Heart left ventricle (tissue), 16 donors: ENCODE measurements at regions of chr18 and their contacts with region 1.

Region 1: GRCh38 chr18:50287441-50288347 is at the start of gene CXXC1:
- DNase-seq: peak; percentile 97 to 99 (median 98)
- ATAC-seq: peak; percentile 95 to 97 (median 96)
- H3K4me3 ChIP-seq: peak within 1 kb of the TSS; percentile 55 to 90 (median 77)
- H3K27ac ChIP-seq: peak within 1 kb of the TSS; percentile 45 to 94 (median 86)
- H3K4me1 ChIP-seq: peaks cover 0 to 20% (median 0%) of the 10 kb centered on the region in 12 donors
- H3K27me3 ChIP-seq: no peaks in the 10 kb centered on the region
- CTCF ChIP-seq: peak; percentile 36 to 63 (median 48)
- POLR2A ChIP-seq: peak in 1 of 2 donors; percentile 44
- total RNA-seq, gene CXXC1: 18.3 to 36.7 (median 33.2) TPM

Region 2: DNA sequence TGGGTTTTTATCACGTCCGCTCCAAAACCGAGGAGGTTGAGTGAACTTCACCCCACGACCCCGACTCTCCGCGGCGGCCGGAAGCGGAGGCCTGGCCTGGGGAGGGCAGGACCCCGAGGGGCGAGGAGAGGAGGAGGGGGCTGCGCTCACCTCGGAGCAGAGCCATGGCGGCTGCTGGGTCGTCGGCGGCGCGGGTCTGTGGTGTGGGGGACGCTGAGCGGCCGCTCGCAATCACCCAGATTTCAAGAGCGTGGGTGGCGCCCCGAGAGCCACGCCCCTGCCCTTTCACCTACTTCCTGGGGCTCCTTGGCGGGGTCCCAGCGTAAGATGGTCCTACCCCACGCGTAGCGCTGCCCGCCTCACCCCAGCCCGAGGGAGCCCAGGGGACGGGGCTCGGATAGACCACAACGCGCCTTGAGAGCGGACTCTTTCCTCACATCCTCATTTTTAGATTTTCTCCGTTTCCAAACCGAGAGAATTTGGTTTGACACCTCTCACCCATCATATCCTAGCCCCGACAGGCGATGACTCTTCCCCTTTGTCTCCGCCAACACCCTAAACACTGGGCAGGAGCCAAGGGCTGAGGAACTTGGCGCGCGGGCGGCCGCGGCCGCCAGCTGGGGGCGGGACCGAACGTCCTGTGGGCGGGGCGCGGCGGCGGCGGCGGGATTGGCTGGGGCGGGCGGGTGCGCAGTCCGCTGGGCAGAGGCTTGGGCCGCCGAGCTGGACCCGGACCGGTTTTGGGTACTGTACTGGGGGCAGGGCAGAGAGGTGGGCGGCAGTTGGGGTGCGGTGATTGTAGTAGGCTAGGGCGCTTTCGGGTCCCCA is 474.2 kb before region 1 on chr18 and contains the start of gene ACAA2:
- intact Hi-C with region 1: loop called in 2 of 10 experiments (anchors 5 kb)
- DNase-seq: peak; percentile 91 to 95 (median 91)
- ATAC-seq: peak; percentile 92 to 97 (median 95)
- H3K4me3 ChIP-seq: peak within 1 kb of the TSS; percentile 71 to 96 (median 86)
- H3K27ac ChIP-seq: peak within 1 kb of the TSS; percentile 82 to 100 (median 97)
- H3K4me1 ChIP-seq: peaks cover 0 to 28% (median 15%) of the 10 kb centered on the region in 12 donors
- H3K27me3 ChIP-seq: no peaks in the 10 kb centered on the region
- CTCF ChIP-seq: no peak
- POLR2A ChIP-seq: peak; percentile 25 to 73
- total RNA-seq, gene ACAA2: 165 to 379 (median 261) TPM

Region 3: DNA sequence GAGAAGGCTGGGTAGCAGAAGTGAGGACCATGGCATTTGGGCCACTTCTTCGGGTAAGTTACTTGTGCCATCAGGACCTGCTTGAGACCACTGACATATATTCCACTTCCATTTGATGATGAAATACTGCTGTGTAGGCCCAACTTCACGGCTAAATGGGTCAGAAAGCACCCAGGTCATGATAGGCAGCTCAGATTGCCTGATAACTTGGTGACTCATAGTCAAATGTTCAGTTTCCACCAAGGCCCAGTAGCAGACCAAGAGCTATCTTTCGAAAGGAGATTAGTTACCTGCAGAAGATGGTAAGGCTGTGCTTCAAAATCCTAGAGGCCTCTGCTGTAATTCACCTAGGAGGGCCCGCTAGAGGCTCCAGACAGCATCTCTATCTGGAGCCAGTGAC is 941.6 kb after region 1 on chr18:
- intact Hi-C with region 1: no loop called
- DNase-seq: no peak
- ATAC-seq: no peak
- H3K4me3 ChIP-seq: no peak overlapping the region
- H3K27ac ChIP-seq: no peak overlapping the region
- H3K4me1 ChIP-seq: no peaks in the 10 kb centered on the region
- H3K27me3 ChIP-seq: no peaks in the 10 kb centered on the region
- CTCF ChIP-seq: no peak
- POLR2A ChIP-seq: no peak